CD4-positive, alpha-beta T cell (primary cell): ENCODE measurements at regions of chr14 and their contacts with region 1.

Region 1: DNA sequence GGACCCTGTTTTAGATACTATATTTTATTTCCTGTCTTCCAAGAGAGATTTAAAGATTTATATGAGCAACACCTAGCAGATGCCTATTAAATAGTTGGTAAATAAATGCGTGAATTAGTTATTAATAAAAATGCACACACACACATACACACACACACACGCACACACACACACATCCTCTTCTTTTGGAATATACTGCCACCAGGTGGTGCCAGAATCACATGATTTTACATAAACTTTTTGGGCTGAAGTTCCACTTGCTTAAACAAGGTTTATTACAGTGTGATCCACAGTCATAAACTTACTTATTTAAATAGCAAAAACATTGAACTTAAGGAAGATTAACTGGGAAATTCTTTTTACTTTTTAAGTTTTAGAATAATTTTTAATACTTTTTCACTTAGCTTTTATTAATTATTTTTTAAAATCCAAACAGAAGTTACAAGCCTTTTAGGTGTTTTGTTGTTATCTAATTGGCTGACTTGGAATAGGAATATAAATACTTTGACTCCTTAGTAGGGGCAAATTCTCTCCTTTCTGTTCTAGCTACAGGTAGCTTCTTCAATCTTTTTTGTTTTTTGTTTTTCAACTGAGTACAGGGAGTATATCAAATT is 17.5 kb downstream of the RAD51B start:
- DNase-seq: peak in 13 of 14 experiments; percentile 18 to 85 (median 40)
- ATAC-seq: peak; percentile 63
- H3K4me3 ChIP-seq: no peak overlapping the region
- H3K4me3 Mint-ChIP-seq: no peak overlapping the region
- H3K27ac ChIP-seq: no peak overlapping the region
- H3K27ac Mint-ChIP-seq: no peak overlapping the region
- H3K4me1 ChIP-seq: no peaks in the 10 kb centered on the region
- H3K4me1 Mint-ChIP-seq: peaks cover 7% of the 10 kb centered on the region
- H3K27me3 ChIP-seq: no peaks in the 10 kb centered on the region
- H3K27me3 Mint-ChIP-seq: no peaks in the 10 kb centered on the region
- CTCF ChIP-seq: peak; percentile 66

Region 2: GRCh38 chr14:67806246-67806645 is 30.9 kb before region 1 on chr14:
- CTCF ChIA-PET with region 1: no interaction called
- POLR2A ChIA-PET with region 1: no interaction called
- intact Hi-C with region 1: no loop called
- DNase-seq: no peak
- ATAC-seq: no peak
- H3K4me3 ChIP-seq: no peak overlapping the region
- H3K4me3 Mint-ChIP-seq: no peak overlapping the region
- H3K27ac ChIP-seq: no peak overlapping the region
- H3K27ac Mint-ChIP-seq: no peak overlapping the region
- H3K4me1 ChIP-seq: no peaks in the 10 kb centered on the region
- H3K4me1 Mint-ChIP-seq: no peaks in the 10 kb centered on the region
- H3K27me3 ChIP-seq: no peaks in the 10 kb centered on the region
- H3K27me3 Mint-ChIP-seq: no peaks in the 10 kb centered on the region
- CTCF ChIP-seq: no peak

Region 3: DNA sequence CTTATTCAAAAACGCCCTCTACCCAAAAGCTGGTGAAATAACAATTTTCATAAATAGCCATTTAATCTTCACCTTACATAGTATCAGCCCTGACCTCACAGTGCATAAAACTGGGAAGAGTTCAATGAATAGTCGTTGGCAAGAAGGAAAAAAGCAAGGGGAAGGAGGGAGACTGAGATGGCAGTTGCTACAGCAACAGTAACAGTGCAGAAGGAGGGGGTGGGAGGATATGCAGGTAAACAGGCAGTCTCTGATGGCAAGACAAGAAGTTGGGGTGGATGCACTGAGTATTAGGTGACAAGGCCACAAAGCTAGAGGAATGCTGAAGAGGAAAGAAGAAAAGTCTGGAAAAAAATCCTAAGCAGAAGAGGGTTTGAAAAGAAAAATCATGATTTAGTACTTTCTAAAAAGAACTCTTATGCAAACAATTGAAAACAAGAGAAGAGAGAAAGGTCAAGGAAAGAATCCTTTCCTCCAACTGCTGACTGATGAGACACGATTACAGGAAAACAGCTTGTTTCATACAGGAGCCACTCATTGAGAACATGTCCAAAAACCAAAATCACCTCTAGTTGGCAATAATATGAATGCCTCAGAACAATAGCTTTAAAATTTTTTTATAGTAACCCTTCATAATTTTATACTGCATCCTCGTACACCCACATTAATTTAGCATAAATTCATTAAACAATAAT is 1259.8 kb after region 1 on chr14:
- CTCF ChIA-PET with region 1: no interaction called
- POLR2A ChIA-PET with region 1: no interaction called
- intact Hi-C with region 1: loop called in 1 of 2 experiments (anchors 5 kb)
- DNase-seq: no peak
- ATAC-seq: no peak
- H3K4me3 ChIP-seq: no peak overlapping the region
- H3K4me3 Mint-ChIP-seq: no peak overlapping the region
- H3K27ac ChIP-seq: no peak overlapping the region
- H3K27ac Mint-ChIP-seq: no peak overlapping the region
- H3K4me1 ChIP-seq: no peaks in the 10 kb centered on the region
- H3K4me1 Mint-ChIP-seq: peaks cover 38% of the 10 kb centered on the region
- H3K27me3 ChIP-seq: no peaks in the 10 kb centered on the region
- H3K27me3 Mint-ChIP-seq: no peaks in the 10 kb centered on the region
- CTCF ChIP-seq: no peak